ENCODE measurements at regions of chr18 and their contacts with region 1.

Region 1: DNA sequence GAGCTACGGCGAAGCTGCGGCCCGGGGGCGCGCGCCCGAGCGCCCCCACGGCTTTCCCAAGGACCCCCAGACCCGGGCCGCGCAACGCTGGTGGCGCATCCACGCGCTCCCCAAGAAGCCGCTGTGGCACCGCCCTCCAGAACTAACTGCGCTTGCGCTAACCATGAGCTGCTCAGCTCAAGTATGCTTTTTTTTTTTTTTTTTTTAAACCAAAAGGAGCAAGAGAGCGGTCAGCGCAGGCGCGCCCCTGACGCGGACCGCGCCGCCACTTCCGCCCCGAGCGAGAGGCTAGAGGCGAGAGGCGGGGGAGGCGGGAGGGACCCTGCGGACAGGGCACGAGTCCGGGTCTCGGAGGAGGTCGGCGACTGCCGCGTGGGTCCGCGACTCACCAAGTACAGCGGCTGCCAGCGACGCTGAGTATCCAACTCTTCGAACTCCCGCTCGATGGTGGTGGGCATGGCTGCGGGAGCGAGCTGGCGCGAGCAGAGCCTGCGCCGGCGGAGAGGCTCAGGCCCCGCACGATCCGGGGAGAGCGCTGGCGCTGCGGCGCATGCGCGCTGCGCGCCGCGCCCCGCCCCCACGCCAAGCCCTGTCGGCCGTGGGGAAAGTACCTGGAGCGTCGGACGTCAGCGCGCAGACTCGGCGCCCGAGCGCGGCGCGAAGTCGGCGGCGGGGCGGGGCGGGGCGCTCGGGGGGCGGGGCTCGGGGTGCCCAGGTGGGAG is at the start of gene PTPN2:
- DNase-seq: peak; percentile 90
- H3K4me3 Mint-ChIP-seq: peak within 1 kb of the TSS; percentile 94
- H3K27ac Mint-ChIP-seq: peak within 1 kb of the TSS; percentile 90
- H3K4me1 Mint-ChIP-seq: peaks cover 54% of the 10 kb centered on the region
- H3K27me3 Mint-ChIP-seq: no peaks in the 10 kb centered on the region
- total RNA-seq, gene PTPN2: 57.3 and 60.6 TPM in 2 replicates

Region 2: GRCh38 chr18:12702221-12703095 is 181.4 kb before region 1 on chr18 and contains the starts of genes CEP76 and PSMG2:
- intact Hi-C with region 1: loop called (anchors 1 kb)
- DNase-seq: peak; percentile 81
- H3K4me3 Mint-ChIP-seq: peak within 1 kb of the TSS; percentile 100
- H3K27ac Mint-ChIP-seq: peak within 1 kb of the TSS; percentile 99
- H3K4me1 Mint-ChIP-seq: peaks cover 31% of the 10 kb centered on the region
- H3K27me3 Mint-ChIP-seq: no peaks in the 10 kb centered on the region
- total RNA-seq, gene CEP76: 14.5 and 17.6 TPM in 2 replicates
- total RNA-seq, gene PSMG2: 105 and 107 TPM in 2 replicates

Region 3: DNA sequence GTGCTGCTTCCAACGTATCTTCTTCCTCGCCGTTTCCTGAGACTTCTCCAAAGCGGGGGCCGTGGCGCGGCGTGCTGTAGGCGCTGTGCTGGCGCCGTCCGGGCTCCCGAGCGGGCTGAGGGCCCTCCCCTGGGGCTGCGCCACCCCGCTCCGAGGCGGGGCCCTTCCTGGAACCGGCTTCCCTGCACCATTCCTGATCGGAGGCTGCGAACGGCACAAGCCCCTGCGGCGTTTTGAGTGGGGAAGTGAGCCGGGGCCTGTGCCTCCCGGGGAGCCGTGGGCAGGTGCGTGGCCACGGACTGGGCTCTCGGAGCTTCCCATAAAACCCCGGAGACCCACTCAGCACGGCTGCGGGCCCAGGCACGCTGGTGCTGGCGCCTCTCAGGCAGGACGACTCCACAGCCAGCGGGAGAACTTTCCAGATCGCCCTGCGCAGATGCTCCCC is 106.3 kb before region 1 on chr18:
- intact Hi-C with region 1: loop called (anchors 5 kb)
- DNase-seq: no peak
- H3K4me3 Mint-ChIP-seq: no peak overlapping the region
- H3K27ac Mint-ChIP-seq: no peak overlapping the region
- H3K4me1 Mint-ChIP-seq: peaks cover 2% of the 10 kb centered on the region
- H3K27me3 Mint-ChIP-seq: no peaks in the 10 kb centered on the region

Region 4: GRCh38 chr18:12839526-12840196 is 44.2 kb before region 1 on chr18:
- intact Hi-C with region 1: loop called (anchors 1 kb)
- DNase-seq: peak; percentile 52
- H3K4me3 Mint-ChIP-seq: peak overlapping the region; percentile 63
- H3K27ac Mint-ChIP-seq: peak overlapping the region; percentile 91
- H3K4me1 Mint-ChIP-seq: peaks cover 70% of the 10 kb centered on the region
- H3K27me3 Mint-ChIP-seq: no peaks in the 10 kb centered on the region

Region 5: GRCh38 chr18:12862467-12862866 is 21.4 kb before region 1 on chr18:
- intact Hi-C with region 1: loop called (anchors 2 kb)
- DNase-seq: no peak
- H3K4me3 Mint-ChIP-seq: no peak overlapping the region
- H3K27ac Mint-ChIP-seq: no peak overlapping the region
- H3K4me1 Mint-ChIP-seq: peaks cover 48% of the 10 kb centered on the region
- H3K27me3 Mint-ChIP-seq: no peaks in the 10 kb centered on the region

Region 6: GRCh38 chr18:12947355-12948041 is 63.7 kb after region 1 on chr18 and contains the start of gene SEH1L:
- intact Hi-C with region 1: loop called (anchors 1 kb)
- DNase-seq: peak; percentile 96
- H3K4me3 Mint-ChIP-seq: peak within 1 kb of the TSS; percentile 98
- H3K27ac Mint-ChIP-seq: peak within 1 kb of the TSS; percentile 99
- H3K4me1 Mint-ChIP-seq: peaks cover 29% of the 10 kb centered on the region
- H3K27me3 Mint-ChIP-seq: no peaks in the 10 kb centered on the region
- total RNA-seq, gene SEH1L: 112 and 115 TPM in 2 replicates

Region 7: GRCh38 chr18:13726232-13726971 is 842.6 kb after region 1 on chr18 and contains the starts of genes FAM210A and RNMT:
- intact Hi-C with region 1: loop called (anchors 5 kb)
- DNase-seq: peak; percentile 91
- H3K4me3 Mint-ChIP-seq: peak within 1 kb of the TSS; percentile 88
- H3K27ac Mint-ChIP-seq: peak within 1 kb of the TSS; percentile 79
- H3K4me1 Mint-ChIP-seq: peaks cover 49% of the 10 kb centered on the region
- H3K27me3 Mint-ChIP-seq: no peaks in the 10 kb centered on the region
- total RNA-seq, gene FAM210A: 30.3 and 33.8 TPM in 2 replicates
- total RNA-seq, gene RNMT: 54.0 and 54.3 TPM in 2 replicates